ENCODE measurements at regions of chr15 and their contacts with region 1.

Region 1: GRCh38 chr15:72473614-72474465 is at the start of gene ARIH1:
- DNase-seq: peak; percentile 98
- total RNA-seq, gene ARIH1: 182 TPM

Region 2: DNA sequence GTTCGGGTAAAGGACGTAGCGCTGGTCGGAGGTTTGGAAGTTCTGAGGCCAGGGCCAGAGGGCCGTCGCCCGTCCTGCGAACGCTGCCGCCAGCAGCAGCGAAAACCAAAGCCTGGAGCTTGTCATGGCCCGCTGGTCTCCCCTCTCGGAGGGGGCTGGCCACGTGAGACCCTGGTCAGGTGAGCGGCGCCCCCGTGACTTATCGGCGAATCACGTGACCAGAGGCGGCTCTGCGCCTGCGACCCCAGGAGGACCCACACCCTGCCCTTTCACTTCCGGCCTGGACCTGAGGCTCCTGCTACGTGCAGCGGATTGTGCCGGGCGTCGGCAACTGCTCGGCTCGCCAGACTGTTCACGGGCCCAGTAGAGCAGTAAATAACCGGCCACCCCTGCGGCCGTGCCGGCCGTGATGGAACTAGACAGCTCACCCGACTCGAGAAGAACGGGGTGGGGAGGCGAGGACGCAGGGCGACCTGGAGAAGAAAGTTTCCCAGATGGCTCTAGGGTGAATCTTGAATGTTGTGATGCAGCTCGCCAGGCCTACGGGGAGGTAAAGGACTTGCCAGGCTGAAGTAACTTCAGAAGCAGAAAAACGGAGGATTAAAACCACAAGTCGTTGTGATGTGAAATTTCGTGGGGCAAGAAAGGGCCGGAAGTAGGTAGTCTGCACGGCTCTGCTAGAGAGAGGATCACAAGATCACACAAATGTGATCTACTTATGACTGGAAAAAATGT is 97.8 kb before region 1 on chr15 and contains the start of gene HEXA:
- intact Hi-C with region 1: loop called (anchors 5 kb)
- DNase-seq: peak; percentile 96
- total RNA-seq, gene HEXA: 77.9 TPM

Region 3: DNA sequence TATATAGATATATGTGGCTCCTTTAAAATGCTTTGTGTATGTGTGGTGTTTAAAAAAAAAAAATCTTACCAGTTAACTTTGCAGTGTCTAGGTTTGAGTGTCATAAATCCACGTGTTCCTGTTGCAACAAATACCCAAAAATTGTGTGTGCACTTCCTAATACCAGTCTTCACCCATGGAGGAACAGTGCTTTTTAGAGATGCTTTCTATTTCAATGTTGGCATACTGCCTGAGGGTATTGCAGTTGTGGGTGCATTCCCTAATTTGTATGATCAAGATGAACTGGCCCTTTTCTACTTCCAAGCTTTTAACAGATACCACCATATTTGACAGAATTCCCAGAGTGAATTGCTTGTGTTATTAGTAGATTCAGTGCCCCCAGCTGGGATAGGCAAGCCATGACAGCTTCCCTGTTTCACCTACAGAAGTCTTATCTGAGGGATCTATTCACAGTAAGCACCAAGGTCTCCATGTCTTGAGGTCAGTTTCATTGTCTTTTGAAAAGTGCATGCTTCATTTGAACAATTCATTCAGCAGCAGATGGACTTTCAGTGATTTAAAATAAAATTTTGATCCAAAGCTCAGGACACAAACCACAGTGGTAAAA is 111.7 kb after region 1 on chr15:
- intact Hi-C with region 1: no loop called
- DNase-seq: no peak

Region 4: GRCh38 chr15:72685925-72686794 is 212.3 kb after region 1 on chr15 and contains the starts of genes BBS4 and HIGD2B:
- intact Hi-C with region 1: loop called (anchors 10 kb)
- DNase-seq: peak; percentile 94
- total RNA-seq, gene BBS4: 12.1 TPM
- total RNA-seq, gene HIGD2B: not detected